ENCODE measurements at regions of chr14 and their contacts with region 1.

Region 1: DNA sequence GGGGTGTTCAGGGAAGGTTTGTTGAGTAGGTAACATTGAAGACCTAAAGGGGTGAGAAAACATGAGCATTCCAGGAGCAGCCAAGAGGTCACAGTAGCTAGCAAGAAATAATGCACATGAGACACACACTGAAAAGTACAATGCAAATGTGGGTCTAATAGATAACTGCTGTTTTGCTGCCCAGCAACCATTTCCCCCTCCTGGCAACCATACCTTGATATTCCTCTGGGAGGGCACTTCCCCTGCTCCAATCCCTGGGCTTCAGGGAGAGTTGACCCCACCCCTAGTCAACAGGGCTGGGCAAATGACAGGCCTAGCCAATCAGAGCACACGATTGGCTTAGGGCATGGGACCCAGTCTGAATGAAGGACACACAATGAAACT is 8.5 kb upstream of the ACTN1 start:
- DNase-seq: no peak
- ATAC-seq: peak; percentile 40; the same call in 1 of the 2 replicates
- H3K4me3 ChIP-seq: no peak overlapping the region
- H3K27ac ChIP-seq: no peak overlapping the region
- H3K4me1 ChIP-seq: peaks cover 9% of the 10 kb centered on the region
- H3K27me3 ChIP-seq: no peaks in the 10 kb centered on the region
- CTCF ChIP-seq: no peak
- POLR2A ChIP-seq: no peak
- RAD21 ChIP-seq: no peak

Region 2: GRCh38 chr14:67943947-67944346 is 1043.7 kb before region 1 on chr14:
- CTCF ChIA-PET with region 1: no interaction called
- POLR2A ChIA-PET with region 1: no interaction called
- dilution Hi-C with region 1: no loop called
- in situ Hi-C with region 1: no loop called
- intact Hi-C with region 1: no loop called
- DNase-seq: peak; percentile 87
- ATAC-seq: peak; percentile 53
- H3K4me3 ChIP-seq: no peak overlapping the region
- H3K27ac ChIP-seq: no peak overlapping the region
- H3K4me1 ChIP-seq: peaks cover 17% of the 10 kb centered on the region
- H3K27me3 ChIP-seq: no peaks in the 10 kb centered on the region
- CTCF ChIP-seq: peak; percentile 87
- POLR2A ChIP-seq: no peak
- RAD21 ChIP-seq: peak; percentile 88

Region 3: DNA sequence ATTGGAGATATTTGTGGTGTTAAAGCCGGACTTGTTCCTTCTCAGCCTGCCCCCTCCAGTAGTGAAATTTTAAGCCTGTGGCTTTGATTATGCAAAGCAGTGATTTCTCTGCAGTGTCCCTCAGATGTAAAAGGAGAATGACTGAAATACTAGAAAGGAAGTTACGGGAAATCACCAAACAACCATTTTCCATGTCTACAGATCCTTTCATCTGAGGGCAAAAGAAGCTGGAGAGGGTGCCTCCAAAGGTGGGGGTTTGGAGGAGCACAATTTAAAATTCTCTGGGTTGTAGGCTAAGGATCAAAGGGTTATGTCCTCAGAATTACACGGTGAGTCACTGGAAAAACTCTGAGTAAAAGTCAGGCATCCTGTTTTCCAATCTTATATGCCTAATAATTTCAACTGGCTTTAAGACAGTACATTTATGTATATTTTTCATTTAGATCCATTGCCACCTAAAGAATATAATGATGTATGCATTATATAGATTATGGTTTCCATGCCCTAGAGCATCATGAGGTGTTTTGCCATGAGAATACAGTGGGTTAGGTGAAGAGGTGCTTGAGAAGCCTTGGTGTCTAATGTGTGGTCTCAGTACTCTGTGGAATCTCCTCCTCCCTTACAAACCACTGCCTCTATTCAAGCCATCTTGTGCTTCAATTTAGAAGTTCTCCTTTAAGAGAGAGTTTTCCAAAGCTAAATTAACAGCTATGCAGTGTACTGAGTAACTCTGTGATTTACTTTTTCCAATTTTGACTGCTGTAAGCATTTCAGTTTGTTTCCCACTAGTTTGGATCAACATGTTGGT is 805.9 kb before region 1 on chr14:
- CTCF ChIA-PET with region 1: no interaction called
- POLR2A ChIA-PET with region 1: no interaction called
- dilution Hi-C with region 1: no loop called
- in situ Hi-C with region 1: no loop called
- intact Hi-C with region 1: no loop called
- DNase-seq: peak; percentile 38
- ATAC-seq: peak; percentile 74
- H3K4me3 ChIP-seq: no peak overlapping the region
- H3K27ac ChIP-seq: no peak overlapping the region
- H3K4me1 ChIP-seq: peaks cover 6% of the 10 kb centered on the region
- H3K27me3 ChIP-seq: no peaks in the 10 kb centered on the region
- CTCF ChIP-seq: no peak
- POLR2A ChIP-seq: no peak
- RAD21 ChIP-seq: no peak

Region 4: GRCh38 chr14:68934066-68934465 is 53.6 kb before region 1 on chr14:
- CTCF ChIA-PET with region 1: no interaction called
- POLR2A ChIA-PET with region 1: interaction called, 10 read pairs
- dilution Hi-C with region 1: no loop called
- in situ Hi-C with region 1: no loop called
- intact Hi-C with region 1: no loop called
- DNase-seq: peak; percentile 40
- ATAC-seq: no peak
- H3K4me3 ChIP-seq: no peak overlapping the region
- H3K27ac ChIP-seq: peak overlapping the region; percentile 19; the same call in 1 of the 2 replicates
- H3K4me1 ChIP-seq: peaks cover 61% of the 10 kb centered on the region
- H3K27me3 ChIP-seq: no peaks in the 10 kb centered on the region
- CTCF ChIP-seq: no peak
- POLR2A ChIP-seq: no peak
- RAD21 ChIP-seq: no peak